GM10248 (cell line): ENCODE measurements at regions of chr14 and their contacts with region 1.

Region 1: GRCh38 chr14:74109369-74109768 is 24.6 kb downstream of the LIN52 start:
- DNase-seq: no peak
- CTCF ChIP-seq: no peak

Region 2: GRCh38 chr14:73878436-73878835 is 230.9 kb before region 1 on chr14:
- CTCF ChIA-PET with region 1: no interaction called
- POLR2A ChIA-PET with region 1: no interaction called
- DNase-seq: no peak
- CTCF ChIP-seq: no peak

Region 3: DNA sequence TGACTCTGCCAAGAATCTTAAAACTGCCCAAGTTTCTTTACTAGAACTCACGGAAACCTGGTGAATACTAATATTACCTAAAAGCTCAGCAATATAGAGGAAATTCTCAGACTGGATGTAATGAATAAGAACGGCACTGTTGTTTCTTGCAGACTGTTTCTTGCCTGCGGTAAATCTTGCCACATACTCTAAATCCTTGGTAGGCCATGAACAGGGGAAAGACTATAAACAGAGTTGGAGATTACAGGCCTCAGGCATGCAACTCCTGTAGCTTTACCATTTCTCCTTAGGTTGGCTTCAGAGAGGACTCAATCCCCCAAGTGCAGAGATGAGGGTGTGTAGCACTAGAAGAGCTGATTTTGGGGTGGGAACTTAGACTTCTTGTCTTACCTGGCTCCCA is 26.2 kb before region 1 on chr14:
- CTCF ChIA-PET with region 1: no interaction called
- POLR2A ChIA-PET with region 1: no interaction called
- DNase-seq: no peak
- CTCF ChIP-seq: no peak

Region 4: GRCh38 chr14:74127634-74128033 is 18.3 kb after region 1 on chr14:
- CTCF ChIA-PET with region 1: interaction called, 16 read pairs
- POLR2A ChIA-PET with region 1: no interaction called
- DNase-seq: no peak
- CTCF ChIP-seq: no peak

Region 5: GRCh38 chr14:74140374-74140850 is 31.0 kb after region 1 on chr14:
- CTCF ChIA-PET with region 1: interaction called, 21 read pairs
- POLR2A ChIA-PET with region 1: no interaction called
- DNase-seq: no peak
- CTCF ChIP-seq: no peak